ENCODE measurements at regions of chr12 and their contacts with region 1.

Region 1: GRCh38 chr12:56574210-56574609 is 52.6 kb downstream of the RBMS2 start:
- DNase-seq: no peak
- ATAC-seq: no peak
- H3K4me3 ChIP-seq: no peak overlapping the region
- H3K27ac ChIP-seq: no peak overlapping the region
- H3K4me1 ChIP-seq: no peaks in the 10 kb centered on the region
- CTCF ChIP-seq: no peak
- EP300 ChIP-seq: no peak
- POLR2A ChIP-seq: no peak
- RAD21 ChIP-seq: no peak

Region 2: GRCh38 chr12:56510786-56511185 is 63.4 kb before region 1 on chr12:
- CTCF ChIA-PET with region 1: interaction called, 282 read pairs
- POLR2A ChIA-PET with region 1: interaction called, 5 read pairs
- DNase-seq: no peak
- ATAC-seq: no peak
- H3K4me3 ChIP-seq: no peak overlapping the region
- H3K27ac ChIP-seq: no peak overlapping the region
- H3K4me1 ChIP-seq: no peaks in the 10 kb centered on the region
- CTCF ChIP-seq: no peak
- EP300 ChIP-seq: no peak
- POLR2A ChIP-seq: no peak
- RAD21 ChIP-seq: no peak

Region 3: DNA sequence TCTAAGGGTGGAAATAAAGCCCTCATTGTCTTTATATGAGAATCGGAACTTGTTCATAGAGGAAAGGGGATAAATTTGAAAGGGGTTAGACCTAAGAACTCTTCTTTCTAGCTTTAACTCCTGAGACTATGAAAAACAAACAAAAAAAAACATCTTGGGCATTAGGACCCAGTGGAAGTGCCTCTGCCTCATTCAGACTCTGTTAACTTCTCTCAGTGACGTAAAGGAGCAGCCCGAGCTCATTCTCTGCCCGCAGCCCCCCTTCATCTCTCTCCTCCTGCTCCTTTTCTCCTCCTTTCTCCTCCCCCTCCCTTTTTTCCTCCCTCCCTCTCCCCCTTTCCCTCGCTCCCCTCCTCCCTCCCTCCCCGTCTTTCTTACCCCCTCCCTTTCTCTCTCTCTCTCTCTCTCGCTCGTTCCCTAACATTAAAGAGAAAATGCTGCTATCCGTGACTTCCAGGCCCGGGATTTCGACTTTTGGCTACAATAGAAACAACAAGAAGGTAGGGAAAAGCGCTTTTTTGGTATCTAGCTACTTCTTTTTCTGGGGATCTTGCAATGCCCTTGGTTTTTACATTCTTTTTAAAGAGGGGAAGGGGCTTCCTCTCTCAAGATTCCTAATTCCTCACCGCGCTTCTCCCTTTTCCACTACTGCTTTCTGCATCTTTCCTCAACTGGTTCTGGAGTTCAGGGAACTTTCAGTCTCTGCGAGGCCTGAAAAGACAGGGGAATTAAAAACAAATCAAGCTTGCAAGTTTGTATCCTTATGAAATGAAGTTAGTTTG is 52.4 kb before region 1 on chr12 and contains the start of gene RBMS2:
- CTCF ChIA-PET with region 1: interaction called, 282 read pairs
- POLR2A ChIA-PET with region 1: no interaction called
- DNase-seq: peak; percentile 81 to 96
- ATAC-seq: peak; percentile 91 to 95
- H3K4me3 ChIP-seq: peak within 1 kb of the TSS; percentile 66
- H3K27ac ChIP-seq: peak within 1 kb of the TSS; percentile 87 to 89
- H3K4me1 ChIP-seq: peaks cover 70% of the 10 kb centered on the region
- CTCF ChIP-seq: no peak
- EP300 ChIP-seq: no peak
- POLR2A ChIP-seq: no peak
- RAD21 ChIP-seq: no peak
- polyA plus RNA-seq, gene RBMS2: 46.4 and 61.6 TPM in 2 replicates

Region 4: DNA sequence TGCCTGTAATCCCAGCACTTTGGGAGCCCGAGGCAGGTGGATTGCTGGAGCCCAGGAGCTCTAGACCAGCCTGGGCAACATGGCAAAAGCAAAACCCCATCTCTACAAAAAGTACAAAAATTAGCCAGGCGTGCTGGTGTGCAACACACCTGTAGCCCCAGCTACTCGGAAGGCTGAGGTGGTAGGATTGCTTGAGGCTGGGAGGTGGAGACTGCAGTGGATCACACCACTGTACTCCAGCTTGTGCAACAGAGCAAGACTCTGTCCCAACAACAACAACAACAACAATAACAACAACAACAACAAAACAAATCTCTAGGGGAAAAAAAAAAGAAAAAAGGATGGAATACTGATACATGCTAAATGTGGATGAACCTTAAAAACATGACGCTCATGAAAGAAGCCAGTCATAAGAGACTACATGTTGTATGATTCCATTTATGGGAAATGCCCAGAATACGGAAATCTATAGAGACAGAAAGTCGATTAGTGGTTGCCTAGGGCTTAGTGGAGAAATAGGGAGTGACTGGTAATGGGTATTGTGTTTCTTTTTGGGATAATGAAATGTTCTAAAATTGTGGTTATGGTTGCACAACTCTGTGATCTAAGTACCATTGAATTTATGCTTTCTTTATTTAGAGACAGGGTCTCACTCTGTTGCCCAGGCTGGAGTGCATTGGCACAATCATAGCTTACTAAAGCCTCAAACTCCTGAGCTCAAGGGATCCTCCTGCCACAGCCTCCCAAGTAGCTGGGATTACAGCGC is 44.7 kb before region 1 on chr12:
- CTCF ChIA-PET with region 1: interaction called, 11 read pairs
- POLR2A ChIA-PET with region 1: no interaction called
- DNase-seq: no peak
- ATAC-seq: no peak
- H3K4me3 ChIP-seq: no peak overlapping the region
- H3K27ac ChIP-seq: peak overlapping the region in 1 of 2 experiments; percentile 59; a peak in 3 of 6 replicates
- H3K4me1 ChIP-seq: peaks cover 59% of the 10 kb centered on the region
- CTCF ChIP-seq: no peak
- EP300 ChIP-seq: no peak
- POLR2A ChIP-seq: no peak
- RAD21 ChIP-seq: no peak